ENCODE measurements at regions of chr13 and their contacts with region 1.

Region 1: GRCh38 chr13:21476893-21477472 is 17.9 kb upstream of the ZDHHC20 start:
- DNase-seq: peak; percentile 67
- H3K4me3 ChIP-seq: peak overlapping the region in 1 of 2 donors; percentile 15
- H3K27ac ChIP-seq: peak overlapping the region in 1 of 2 donors; percentile 36
- H3K4me1 ChIP-seq: no peaks in the 10 kb centered on the region
- H3K27me3 ChIP-seq: no peaks in the 10 kb centered on the region
- CTCF ChIP-seq: peak; percentile 67 to 85 (median 80)
- POLR2A ChIP-seq: no peak

Region 2: DNA sequence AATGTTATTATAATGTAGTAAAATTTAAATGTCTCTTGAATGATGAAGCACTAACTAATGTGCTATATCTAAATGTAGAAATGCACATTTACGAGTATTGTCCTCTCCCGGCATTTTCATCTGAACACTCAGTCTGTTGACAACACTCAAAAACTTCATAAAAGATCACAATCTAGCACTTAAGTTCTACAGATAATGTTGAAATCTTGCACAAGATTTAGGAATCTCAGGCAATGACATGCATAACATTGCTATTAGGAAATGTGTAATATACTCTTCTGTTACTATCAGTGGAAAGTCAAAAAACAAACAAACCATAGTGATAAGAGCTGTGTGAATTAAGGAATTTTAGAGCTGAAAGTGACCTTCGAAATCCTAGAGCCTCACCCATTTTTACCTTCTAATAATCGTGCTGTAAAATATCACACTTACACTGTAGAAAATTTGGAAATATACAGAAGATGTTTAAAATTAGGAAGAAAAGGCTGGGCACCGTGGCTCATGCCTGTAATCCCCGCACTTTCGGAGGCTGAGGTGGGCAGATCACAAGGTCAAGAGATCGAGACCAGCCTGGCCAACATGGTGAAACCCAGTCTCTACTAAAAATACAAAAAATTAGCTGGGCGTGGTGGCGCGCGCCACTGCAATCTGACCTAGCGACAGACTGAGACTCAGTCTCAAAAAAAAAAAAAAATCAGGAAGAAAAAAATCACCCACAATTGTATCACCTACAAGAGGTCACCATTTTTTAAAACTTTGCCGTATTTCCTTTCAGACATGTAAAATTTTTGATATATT is 536.7 kb before region 1 on chr13:
- intact Hi-C with region 1: loop called (anchors 5 kb)
- DNase-seq: no peak
- H3K4me3 ChIP-seq: no peak overlapping the region
- H3K27ac ChIP-seq: no peak overlapping the region
- H3K4me1 ChIP-seq: no peaks in the 10 kb centered on the region
- H3K27me3 ChIP-seq: no peaks in the 10 kb centered on the region
- CTCF ChIP-seq: no peak
- POLR2A ChIP-seq: no peak

Region 3: GRCh38 chr13:21115231-21115630 is 361.8 kb before region 1 on chr13:
- intact Hi-C with region 1: loop called (anchors 10 kb)
- DNase-seq: no peak
- H3K4me3 ChIP-seq: no peak overlapping the region
- H3K27ac ChIP-seq: no peak overlapping the region
- H3K4me1 ChIP-seq: no peaks in the 10 kb centered on the region
- H3K27me3 ChIP-seq: no peaks in the 10 kb centered on the region
- CTCF ChIP-seq: no peak
- POLR2A ChIP-seq: no peak

Region 4: GRCh38 chr13:21176220-21176982 is 300.6 kb before region 1 on chr13 and contains the starts of genes MRPL57 and SKA3:
- intact Hi-C with region 1: loop called (anchors 10 kb)
- DNase-seq: peak; percentile 88
- H3K4me3 ChIP-seq: peak within 1 kb of the TSS; percentile 58 to 79
- H3K27ac ChIP-seq: peak within 1 kb of the TSS; percentile 91 to 93
- H3K4me1 ChIP-seq: no peaks in the 10 kb centered on the region
- H3K27me3 ChIP-seq: no peaks in the 10 kb centered on the region
- CTCF ChIP-seq: peak in 2 of 4 experiments; percentile 39 to 62
- POLR2A ChIP-seq: peak; percentile 88
- total RNA-seq, gene MRPL57: 51.5 to 89.6 TPM
- total RNA-seq, gene SKA3: 0.59 to 4.3 TPM

Region 5: GRCh38 chr13:21297914-21298831 is 178.8 kb before region 1 on chr13:
- intact Hi-C with region 1: loop called (anchors 2 kb)
- DNase-seq: peak; percentile 82
- H3K4me3 ChIP-seq: peak overlapping the region; percentile 93 to 97
- H3K27ac ChIP-seq: peak overlapping the region; percentile 78 to 83
- H3K4me1 ChIP-seq: no peaks in the 10 kb centered on the region
- H3K27me3 ChIP-seq: no peaks in the 10 kb centered on the region
- CTCF ChIP-seq: peak; percentile 50 to 96 (median 91)
- POLR2A ChIP-seq: peak; percentile 59

Region 6: GRCh38 chr13:21420706-21421105 is 56.3 kb before region 1 on chr13:
- intact Hi-C with region 1: no loop called
- DNase-seq: no peak
- H3K4me3 ChIP-seq: no peak overlapping the region
- H3K27ac ChIP-seq: no peak overlapping the region
- H3K4me1 ChIP-seq: no peaks in the 10 kb centered on the region
- H3K27me3 ChIP-seq: no peaks in the 10 kb centered on the region
- CTCF ChIP-seq: no peak
- POLR2A ChIP-seq: no peak

Measured in prostate gland (tissue), 2 donors.